ENCODE measurements at regions of chr1 and their contacts with region 1.

Region 1: DNA sequence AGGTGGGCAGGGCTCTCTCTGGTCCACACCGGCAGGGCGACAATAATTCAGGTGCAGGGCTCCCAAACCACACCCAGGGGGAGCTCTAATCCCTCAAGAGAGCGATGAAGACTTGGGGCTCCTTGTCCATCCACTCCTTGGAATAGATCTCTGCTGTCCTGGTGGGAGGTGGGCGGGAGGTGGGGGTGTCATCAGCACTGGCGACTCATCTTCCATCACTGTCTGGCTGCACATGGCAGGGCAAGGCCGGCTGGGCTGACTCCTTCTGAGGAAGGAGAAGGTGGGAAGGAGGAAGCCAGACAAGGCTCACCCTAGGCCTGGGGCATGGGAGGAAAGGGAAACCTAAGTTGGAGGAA is 29.3 kb downstream of the TNNT2 start:
- DNase-seq: no peak
- ATAC-seq: peak; percentile 88
- H3K4me3 ChIP-seq: no peak overlapping the region
- H3K27ac ChIP-seq: no peak overlapping the region
- H3K4me1 ChIP-seq: no peaks in the 10 kb centered on the region
- H3K27me3 ChIP-seq: peaks cover 2% of the 10 kb centered on the region
- CTCF ChIP-seq: peak; percentile 83

Region 2: DNA sequence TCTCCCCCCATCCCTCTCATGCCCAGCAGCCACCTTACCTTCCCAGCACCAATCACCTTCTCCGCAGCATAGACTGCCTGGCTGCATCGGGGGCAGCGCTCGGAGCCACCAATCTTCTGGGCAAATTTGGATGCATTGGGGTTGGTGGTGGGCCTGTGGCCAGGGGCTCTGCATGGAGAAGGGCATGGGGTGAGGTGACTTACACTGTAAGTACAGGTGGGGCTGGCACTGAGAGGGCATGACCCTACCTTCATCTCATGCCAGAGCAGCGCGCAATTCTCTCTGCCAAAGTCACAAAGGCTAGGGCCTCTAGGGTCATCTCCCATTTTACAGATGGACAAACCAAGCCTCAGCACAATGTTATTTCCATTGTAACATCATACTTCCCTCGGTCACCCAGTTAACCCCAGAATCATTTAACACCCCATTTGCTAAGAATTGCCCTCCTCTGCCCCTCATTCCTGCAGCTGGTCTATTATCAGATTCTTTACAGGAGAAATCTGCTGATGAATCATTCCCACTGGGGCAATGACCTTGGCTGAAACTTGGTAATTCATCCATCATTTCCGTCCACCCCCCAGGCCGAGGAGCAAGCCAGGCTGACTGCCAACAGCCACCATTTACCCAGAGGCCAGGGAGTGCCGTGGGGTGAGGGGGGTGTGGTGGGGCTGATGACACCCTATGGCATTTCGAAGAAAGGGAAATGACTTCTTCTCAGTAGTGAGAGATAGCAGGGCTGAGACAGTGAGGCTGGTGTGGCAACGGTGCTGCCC is 140.8 kb after region 1 on chr1:
- CTCF ChIA-PET with region 1: no interaction called
- POLR2A ChIA-PET with region 1: no interaction called
- in situ Hi-C with region 1: no loop called
- intact Hi-C with region 1: no loop called
- DNase-seq: no peak
- ATAC-seq: peak; percentile 49; the same call in 1 of the 2 replicates
- H3K4me3 ChIP-seq: no peak overlapping the region
- H3K27ac ChIP-seq: no peak overlapping the region
- H3K4me1 ChIP-seq: no peaks in the 10 kb centered on the region
- H3K27me3 ChIP-seq: no peaks in the 10 kb centered on the region
- CTCF ChIP-seq: no peak

Region 3: DNA sequence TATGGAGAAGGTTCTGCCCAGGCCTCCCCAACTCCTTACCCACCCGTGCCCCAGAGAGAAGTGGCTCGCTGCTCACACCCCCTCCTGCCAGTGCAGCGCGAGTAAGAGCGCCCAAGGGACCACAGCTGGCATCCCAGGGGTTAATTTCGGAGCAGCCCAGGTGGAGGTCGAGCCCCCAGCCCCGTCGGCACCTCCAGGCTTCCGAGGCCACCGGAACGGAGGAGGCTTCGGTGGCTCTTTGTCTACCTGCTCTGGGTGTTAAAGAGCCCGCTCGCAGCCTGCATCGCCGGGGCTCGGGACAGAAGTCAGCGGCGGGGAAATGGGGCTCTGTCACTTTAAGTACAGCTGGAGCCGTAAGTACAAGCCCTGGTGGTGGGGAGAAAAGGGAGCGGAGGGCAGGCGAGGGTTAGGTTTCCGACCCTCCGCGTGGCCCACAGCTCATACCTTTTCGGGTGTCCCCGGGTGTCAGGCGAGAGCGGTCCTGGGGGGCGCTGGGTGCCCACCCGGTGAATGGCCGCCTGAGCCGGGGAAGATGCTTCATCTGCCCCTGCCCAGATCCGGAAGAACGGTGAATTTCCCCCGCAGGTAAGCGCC is 391.4 kb after region 1 on chr1:
- CTCF ChIA-PET with region 1: interaction called, 10 read pairs
- POLR2A ChIA-PET with region 1: no interaction called
- in situ Hi-C with region 1: no loop called
- intact Hi-C with region 1: no loop called
- DNase-seq: no peak
- ATAC-seq: peak; percentile 87
- H3K4me3 ChIP-seq: peak overlapping the region; percentile 57 to 83
- H3K27ac ChIP-seq: peak overlapping the region; percentile 65
- H3K4me1 ChIP-seq: 0 out of 2 replicates have a peak, but pooled peaks cover 20% of the 10 kb centered on the region
- H3K27me3 ChIP-seq: no peaks in the 10 kb centered on the region
- CTCF ChIP-seq: no peak

Measured in Panc1 (cell line).